CD4-positive, alpha-beta T cell (primary cell): ENCODE measurements at regions of chr5 and their contacts with region 1.

Region 1: DNA sequence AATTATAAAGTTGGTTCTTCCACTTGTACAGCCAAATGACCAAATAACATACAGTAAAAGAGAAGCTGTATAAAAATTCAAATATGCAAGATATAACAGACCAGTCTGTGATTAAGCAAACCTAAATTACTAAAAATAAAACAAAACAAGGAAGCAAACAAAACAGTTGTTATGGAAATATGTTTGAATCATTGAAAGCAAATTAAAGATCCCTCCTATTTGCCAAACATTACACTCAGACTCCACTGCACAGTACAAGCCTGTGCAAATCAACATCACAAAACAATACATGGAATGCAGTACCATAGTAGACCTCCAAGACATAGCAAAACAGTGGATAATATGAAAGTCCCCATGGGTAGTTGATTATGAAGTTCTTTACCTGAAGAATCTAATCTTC is 288.1 kb upstream of the PTGER4 start:
- DNase-seq: no peak
- ATAC-seq: peak; percentile 53
- H3K4me3 ChIP-seq: no peak overlapping the region
- H3K4me3 Mint-ChIP-seq: no peak overlapping the region
- H3K27ac ChIP-seq: no peak overlapping the region
- H3K27ac Mint-ChIP-seq: no peak overlapping the region
- H3K4me1 ChIP-seq: peaks cover 25% of the 10 kb centered on the region
- H3K4me1 Mint-ChIP-seq: peaks cover 47% of the 10 kb centered on the region
- H3K27me3 ChIP-seq: no peaks in the 10 kb centered on the region
- H3K27me3 Mint-ChIP-seq: no peaks in the 10 kb centered on the region
- CTCF ChIP-seq: no peak

Region 2: GRCh38 chr5:40428126-40428525 is 36.5 kb after region 1 on chr5:
- CTCF ChIA-PET with region 1: no interaction called
- POLR2A ChIA-PET with region 1: no interaction called
- intact Hi-C with region 1: loop called in 1 of 2 experiments (anchors 5 kb)
- DNase-seq: peak in 3 of 14 experiments; percentile 34 to 61 (median 48)
- ATAC-seq: peak; percentile 43
- H3K4me3 ChIP-seq: no peak overlapping the region
- H3K4me3 Mint-ChIP-seq: no peak overlapping the region
- H3K27ac ChIP-seq: no peak overlapping the region
- H3K27ac Mint-ChIP-seq: no peak overlapping the region
- H3K4me1 ChIP-seq: peaks cover 17% of the 10 kb centered on the region
- H3K4me1 Mint-ChIP-seq: peaks cover 22% of the 10 kb centered on the region
- H3K27me3 ChIP-seq: no peaks in the 10 kb centered on the region
- H3K27me3 Mint-ChIP-seq: no peaks in the 10 kb centered on the region
- CTCF ChIP-seq: no peak

Region 3: DNA sequence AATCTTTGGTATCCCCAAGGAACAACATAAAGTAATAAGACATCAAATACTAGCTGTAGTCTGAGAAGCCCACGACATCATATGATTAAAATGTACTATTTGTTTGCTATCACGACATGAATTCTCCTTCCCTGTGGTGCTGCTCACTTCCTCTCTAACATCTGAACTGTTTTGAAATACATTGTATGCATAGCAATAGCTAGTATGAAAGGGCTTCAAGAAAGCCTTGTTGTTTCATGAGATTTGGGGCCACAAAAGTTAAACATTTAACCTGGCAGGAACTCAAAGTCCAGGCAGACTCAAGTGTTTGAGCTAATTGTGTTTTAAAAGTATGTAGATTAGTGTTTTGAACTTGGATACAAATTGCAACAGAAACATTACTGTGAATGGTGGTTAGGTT is 50.7 kb after region 1 on chr5:
- CTCF ChIA-PET with region 1: no interaction called
- POLR2A ChIA-PET with region 1: no interaction called
- intact Hi-C with region 1: no loop called
- DNase-seq: peak in 2 of 14 experiments; percentile 40 to 43
- ATAC-seq: peak; percentile 63
- H3K4me3 ChIP-seq: no peak overlapping the region
- H3K4me3 Mint-ChIP-seq: peak overlapping the region; percentile 36
- H3K27ac ChIP-seq: peak overlapping the region; percentile 26 to 34
- H3K27ac Mint-ChIP-seq: peak overlapping the region; percentile 87
- H3K4me1 ChIP-seq: peaks cover 22% of the 10 kb centered on the region
- H3K4me1 Mint-ChIP-seq: peaks cover 42% of the 10 kb centered on the region
- H3K27me3 ChIP-seq: no peaks in the 10 kb centered on the region
- H3K27me3 Mint-ChIP-seq: no peaks in the 10 kb centered on the region
- CTCF ChIP-seq: no peak